Common myeloid progenitor, CD34-positive (primary cell): ENCODE measurements at regions of chr14 and their contacts with region 1.

Region 1: DNA sequence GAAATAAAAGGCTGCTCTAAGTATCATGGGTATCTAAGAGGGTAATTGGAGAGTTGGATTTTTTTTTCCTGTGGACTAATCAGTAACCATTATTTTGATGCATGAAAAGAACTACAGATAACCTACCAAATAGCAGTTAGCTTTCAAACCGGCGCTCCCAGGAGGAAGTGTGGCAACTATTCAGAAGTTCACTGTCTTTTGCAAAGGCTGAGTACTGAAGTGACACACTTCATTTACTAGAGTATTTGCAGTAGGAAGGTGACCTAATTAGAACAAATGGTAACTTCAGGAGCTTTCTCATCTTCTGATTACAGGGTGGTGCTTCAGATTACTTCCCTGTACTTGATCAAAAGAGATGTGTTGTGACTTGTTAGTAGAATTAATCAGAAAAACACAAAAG is 87.7 kb downstream of the PELI2 start:
- DNase-seq: peak in 2 of 3 donors; percentile 42 to 60
- H3K4me3 ChIP-seq: peak overlapping the region in 1 of 7 experiments; percentile 1
- H3K27ac ChIP-seq: no peak overlapping the region
- H3K4me1 ChIP-seq: peaks cover 7 to 25% (median 16%) of the 10 kb centered on the region in 4 experiments
- H3K27me3 ChIP-seq: no peaks in the 10 kb centered on the region

Region 2: GRCh38 chr14:56195704-56196103 is 10.2 kb before region 1 on chr14:
- CTCF ChIA-PET with region 1: interaction called, 16 read pairs
- POLR2A ChIA-PET with region 1: no interaction called
- DNase-seq: peak; percentile 33 to 94 (median 86)
- H3K4me3 ChIP-seq: peak overlapping the region in 4 of 7 experiments; percentile 8 to 54 (median 14)
- H3K27ac ChIP-seq: peak overlapping the region in 1 of 2 experiments; percentile 21
- H3K4me1 ChIP-seq: peaks cover 21 to 67% (median 39%) of the 10 kb centered on the region in 4 experiments
- H3K27me3 ChIP-seq: no peaks in the 10 kb centered on the region